Activated B cell treated with CpG ODN at 0.5 μM for 24 hours (primary cell): ENCODE measurements at regions of chr11 and their contacts with region 1.

Region 1: DNA sequence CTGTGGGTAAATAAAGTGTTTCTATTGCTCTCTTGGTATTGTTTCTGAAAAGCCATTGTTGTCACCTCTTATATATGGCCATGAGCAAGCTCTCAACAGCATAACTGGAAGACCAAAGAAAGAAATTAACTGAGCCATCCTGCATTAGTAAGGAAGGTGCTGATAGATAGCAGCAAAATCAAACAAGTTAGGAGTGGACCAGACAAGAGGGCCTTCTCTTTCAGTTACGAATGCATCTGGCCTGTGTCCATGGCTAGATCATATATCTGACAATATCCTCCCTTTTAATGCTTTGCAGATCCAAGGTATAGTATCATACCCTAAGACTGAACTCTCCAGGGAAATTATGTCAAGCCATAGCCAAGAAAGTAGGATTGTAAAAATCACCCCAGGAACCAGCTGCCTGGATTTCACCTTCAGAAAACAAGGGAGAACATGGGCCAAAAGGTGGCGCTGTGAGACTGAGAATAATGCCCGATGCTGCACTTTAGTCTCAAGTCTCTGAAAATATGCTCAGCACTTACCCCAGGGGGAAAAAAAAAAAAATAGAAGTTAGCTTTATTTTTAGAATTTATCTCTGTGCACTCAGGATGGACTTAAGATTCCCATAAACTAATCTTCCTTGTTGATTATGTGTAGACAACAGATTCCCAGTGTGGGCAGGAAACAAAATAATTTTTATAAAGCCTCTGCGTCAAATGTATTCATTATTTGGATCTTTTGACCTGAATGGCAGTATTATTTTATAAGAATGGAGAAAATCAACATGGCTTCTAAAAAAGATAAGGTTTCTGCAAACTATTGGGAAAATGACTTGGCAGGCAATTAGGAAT is 415.1 kb downstream of the ETS1 start:
- DNase-seq: peak; percentile 65
- ATAC-seq: peak; percentile 79
- H3K4me3 Mint-ChIP-seq: no peak overlapping the region
- H3K27ac Mint-ChIP-seq: no peak overlapping the region
- H3K4me1 Mint-ChIP-seq: peaks cover 5% of the 10 kb centered on the region
- H3K27me3 Mint-ChIP-seq: no peaks in the 10 kb centered on the region
- CTCF ChIP-seq: no peak

Region 2: DNA sequence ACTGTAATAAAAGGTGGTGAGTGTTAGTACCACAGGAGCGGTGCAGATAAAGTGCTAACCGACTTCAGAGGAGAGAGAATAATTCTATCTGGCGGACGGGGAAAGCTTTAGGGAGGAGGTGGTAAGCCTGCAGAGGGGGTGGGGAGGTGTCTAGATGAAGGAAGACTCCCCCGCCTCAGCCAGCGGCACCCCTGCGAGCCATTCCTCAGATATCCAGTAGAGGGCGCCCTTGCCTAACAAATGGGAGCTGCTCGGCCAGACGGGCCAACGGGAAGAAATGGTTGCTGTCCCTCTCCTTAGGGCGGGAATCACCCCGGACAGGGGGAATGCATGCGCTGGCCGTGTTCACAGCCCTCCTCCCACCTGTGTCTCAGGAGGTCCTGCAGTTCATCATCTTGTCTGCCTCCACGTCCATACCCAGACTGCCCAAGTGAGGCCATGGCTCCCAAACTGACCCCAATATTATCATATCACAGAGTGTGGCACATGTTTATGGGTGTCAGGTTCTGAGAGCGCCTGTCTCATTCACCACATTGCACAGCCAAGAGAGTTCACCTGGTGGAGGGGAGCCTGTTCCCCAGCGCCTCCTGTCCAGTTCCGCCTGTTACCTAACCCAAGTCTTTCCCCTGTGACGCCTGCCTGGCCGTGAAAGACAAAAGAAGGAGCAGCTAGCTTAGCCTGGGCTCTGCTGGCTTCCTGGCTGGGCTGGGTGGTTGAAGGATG is 1731.3 kb before region 1 on chr11:
- CTCF ChIA-PET with region 1: no interaction called
- POLR2A ChIA-PET with region 1: no interaction called
- intact Hi-C with region 1: loop called (anchors 5 kb)
- DNase-seq: peak; percentile 65
- ATAC-seq: peak; percentile 57
- H3K4me3 Mint-ChIP-seq: no peak overlapping the region
- H3K27ac Mint-ChIP-seq: no peak overlapping the region
- H3K4me1 Mint-ChIP-seq: peaks cover 4% of the 10 kb centered on the region
- H3K27me3 Mint-ChIP-seq: peaks cover 9% of the 10 kb centered on the region
- CTCF ChIP-seq: peak; percentile 70

Region 3: DNA sequence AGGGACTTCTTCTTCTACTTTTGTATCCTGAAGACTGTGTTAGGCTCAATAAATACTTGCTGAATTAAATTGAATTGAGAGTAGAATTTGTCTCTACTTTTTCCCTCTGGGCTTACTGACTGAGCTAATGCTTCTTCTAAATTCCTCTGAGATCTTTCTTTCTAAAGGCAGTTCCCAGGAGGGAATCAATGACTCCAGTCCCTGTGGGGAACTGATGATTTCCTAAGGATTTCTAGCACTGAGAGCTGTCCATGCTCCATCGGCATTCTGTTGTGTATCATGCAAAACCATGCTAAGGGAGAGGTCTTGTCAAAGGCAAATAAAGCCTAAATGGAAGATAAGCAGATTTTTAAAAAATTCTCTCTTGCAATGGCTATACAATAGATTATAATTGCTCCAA is 1022.9 kb before region 1 on chr11:
- CTCF ChIA-PET with region 1: no interaction called
- POLR2A ChIA-PET with region 1: no interaction called
- intact Hi-C with region 1: no loop called
- DNase-seq: no peak
- ATAC-seq: no peak
- H3K4me3 Mint-ChIP-seq: no peak overlapping the region
- H3K27ac Mint-ChIP-seq: no peak overlapping the region
- H3K4me1 Mint-ChIP-seq: no peaks in the 10 kb centered on the region
- H3K27me3 Mint-ChIP-seq: no peaks in the 10 kb centered on the region
- CTCF ChIP-seq: no peak

Region 4: GRCh38 chr11:128261011-128261421 is 88.8 kb after region 1 on chr11:
- CTCF ChIA-PET with region 1: no interaction called
- POLR2A ChIA-PET with region 1: no interaction called
- intact Hi-C with region 1: no loop called
- DNase-seq: no peak
- ATAC-seq: peak; percentile 22
- H3K4me3 Mint-ChIP-seq: no peak overlapping the region
- H3K27ac Mint-ChIP-seq: peak overlapping the region; percentile 85
- H3K4me1 Mint-ChIP-seq: peaks cover 84% of the 10 kb centered on the region
- H3K27me3 Mint-ChIP-seq: no peaks in the 10 kb centered on the region
- CTCF ChIP-seq: no peak

Region 5: DNA sequence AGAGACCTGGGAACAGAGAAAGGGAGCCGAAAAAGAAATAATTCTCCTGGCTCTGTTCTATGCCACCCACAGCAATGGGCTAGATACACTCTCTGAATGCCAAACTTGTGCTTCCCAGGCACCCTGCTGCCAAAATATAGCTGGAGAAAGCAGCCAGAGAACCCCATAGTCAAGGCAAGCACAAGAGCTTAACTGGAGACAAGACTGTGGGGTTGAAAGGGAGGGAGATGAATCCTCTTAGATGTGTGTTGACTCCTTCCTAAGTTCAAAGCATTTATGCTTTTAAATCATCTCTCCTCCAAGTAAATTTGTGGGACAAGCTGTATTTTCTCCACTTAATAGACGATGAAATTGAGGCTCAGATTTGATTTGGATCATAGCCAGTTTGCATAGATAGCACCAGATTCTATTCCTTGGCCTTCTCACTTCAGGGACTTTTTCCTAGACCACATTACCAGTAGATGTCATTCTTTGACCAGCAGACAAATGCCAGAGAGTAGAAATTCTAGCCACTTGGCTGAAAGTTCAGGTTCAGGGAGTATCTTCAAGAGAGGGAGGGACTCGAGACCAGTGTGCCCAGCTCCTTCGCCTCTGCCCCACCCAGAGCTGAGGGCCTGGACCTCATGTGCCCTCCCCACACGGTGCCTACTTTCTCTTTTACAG is 431.6 kb after region 1 on chr11:
- CTCF ChIA-PET with region 1: interaction called, 13 read pairs
- POLR2A ChIA-PET with region 1: no interaction called
- intact Hi-C with region 1: no loop called
- DNase-seq: no peak
- ATAC-seq: peak; percentile 63
- H3K4me3 Mint-ChIP-seq: no peak overlapping the region
- H3K27ac Mint-ChIP-seq: peak overlapping the region; percentile 78
- H3K4me1 Mint-ChIP-seq: peaks cover 70% of the 10 kb centered on the region
- H3K27me3 Mint-ChIP-seq: no peaks in the 10 kb centered on the region
- CTCF ChIP-seq: no peak

Region 6: GRCh38 chr11:128776424-128777284 is 604.4 kb after region 1 on chr11:
- CTCF ChIA-PET with region 1: interaction called, 17 read pairs
- POLR2A ChIA-PET with region 1: no interaction called
- intact Hi-C with region 1: loop called (anchors 1 kb)
- DNase-seq: no peak
- ATAC-seq: no peak
- H3K4me3 Mint-ChIP-seq: no peak overlapping the region
- H3K27ac Mint-ChIP-seq: peak overlapping the region; percentile 56
- H3K4me1 Mint-ChIP-seq: peaks cover 42% of the 10 kb centered on the region
- H3K27me3 Mint-ChIP-seq: no peaks in the 10 kb centered on the region
- CTCF ChIP-seq: no peak

Region 7: DNA sequence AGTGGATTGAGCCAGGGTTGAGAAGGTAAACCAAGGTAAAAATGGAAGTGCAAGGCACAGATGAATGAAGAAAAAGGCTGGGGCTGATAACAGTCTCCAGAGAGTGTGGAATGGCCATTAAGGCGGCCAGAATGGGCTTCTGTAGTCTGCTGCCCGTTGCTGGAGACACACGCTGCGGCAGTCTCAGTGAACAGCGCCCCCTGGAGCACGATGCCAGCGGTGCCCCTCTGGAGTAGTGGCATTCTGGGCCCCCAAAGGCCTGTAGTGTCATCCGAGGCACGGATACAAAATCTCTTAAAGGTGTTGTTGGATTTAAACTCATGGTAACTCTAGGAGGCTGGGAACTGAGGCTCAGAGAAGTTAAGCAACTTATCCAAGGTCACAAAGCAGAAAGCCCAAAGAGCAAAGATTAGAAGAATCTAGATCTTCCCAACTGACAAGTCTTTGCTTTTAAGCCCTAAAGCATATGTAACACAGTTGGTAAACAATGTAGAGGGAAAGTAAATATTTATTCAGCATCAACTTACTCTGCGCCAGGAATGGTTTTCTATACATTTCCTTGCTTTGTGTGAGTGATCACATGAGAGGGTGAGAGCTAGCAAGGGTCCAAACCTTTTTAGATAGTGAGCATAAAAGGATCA is 676.7 kb after region 1 on chr11:
- CTCF ChIA-PET with region 1: interaction called, 8 read pairs
- POLR2A ChIA-PET with region 1: no interaction called
- intact Hi-C with region 1: loop called (anchors 1 kb)
- DNase-seq: peak; percentile 57
- ATAC-seq: peak; percentile 73
- H3K4me3 Mint-ChIP-seq: no peak overlapping the region
- H3K27ac Mint-ChIP-seq: peak overlapping the region; percentile 60
- H3K4me1 Mint-ChIP-seq: peaks cover 58% of the 10 kb centered on the region
- H3K27me3 Mint-ChIP-seq: no peaks in the 10 kb centered on the region
- CTCF ChIP-seq: peak; percentile 29

Region 8: DNA sequence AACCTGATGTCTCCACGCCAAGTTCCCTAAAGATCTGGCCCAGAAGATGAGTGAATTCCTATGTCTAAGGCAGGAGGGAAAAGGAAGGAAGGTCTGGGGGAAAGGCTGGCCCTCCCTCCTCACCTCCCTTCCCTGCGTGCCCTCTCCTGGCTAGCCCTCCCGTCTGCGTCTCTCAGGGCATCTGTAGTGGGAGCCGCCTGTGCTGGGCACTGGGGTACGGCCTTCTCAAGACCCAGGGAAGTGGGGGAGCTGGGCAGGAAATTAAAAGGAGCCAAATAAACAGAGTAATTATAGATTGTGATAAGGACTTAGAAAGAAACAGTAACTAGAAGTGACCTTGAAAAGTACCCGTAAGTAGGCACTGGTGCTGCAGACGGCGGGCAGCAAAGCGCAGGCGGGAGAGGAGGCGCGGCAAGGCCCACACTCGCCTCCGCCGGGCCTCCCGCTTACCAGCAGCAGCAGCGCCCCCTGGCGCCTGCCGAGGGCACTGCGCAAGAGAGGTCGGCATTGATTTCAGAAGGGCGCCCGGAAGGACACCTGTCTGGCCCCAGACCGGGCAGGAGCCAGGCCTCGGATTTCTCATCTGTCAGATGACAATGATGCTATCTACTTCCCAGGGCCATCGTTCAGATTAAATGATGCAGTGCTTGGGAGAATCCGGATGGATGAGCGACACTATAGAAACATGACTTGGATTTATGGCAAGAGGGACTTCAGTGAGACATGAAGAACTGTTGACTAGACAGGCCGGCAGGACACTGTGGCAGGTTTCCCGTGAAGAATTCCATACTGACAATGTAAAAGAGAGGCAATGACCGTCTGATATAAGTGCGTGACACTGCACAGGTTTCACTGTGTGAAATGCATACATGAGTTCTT is 687.5 kb after region 1 on chr11:
- CTCF ChIA-PET with region 1: interaction called, 8 read pairs
- POLR2A ChIA-PET with region 1: no interaction called
- intact Hi-C with region 1: loop called (anchors 1 kb)
- DNase-seq: peak; percentile 77
- ATAC-seq: peak; percentile 98
- H3K4me3 Mint-ChIP-seq: no peak overlapping the region
- H3K27ac Mint-ChIP-seq: no peak overlapping the region
- H3K4me1 Mint-ChIP-seq: peaks cover 16% of the 10 kb centered on the region
- H3K27me3 Mint-ChIP-seq: no peaks in the 10 kb centered on the region
- CTCF ChIP-seq: peak; percentile 54

Region 9: DNA sequence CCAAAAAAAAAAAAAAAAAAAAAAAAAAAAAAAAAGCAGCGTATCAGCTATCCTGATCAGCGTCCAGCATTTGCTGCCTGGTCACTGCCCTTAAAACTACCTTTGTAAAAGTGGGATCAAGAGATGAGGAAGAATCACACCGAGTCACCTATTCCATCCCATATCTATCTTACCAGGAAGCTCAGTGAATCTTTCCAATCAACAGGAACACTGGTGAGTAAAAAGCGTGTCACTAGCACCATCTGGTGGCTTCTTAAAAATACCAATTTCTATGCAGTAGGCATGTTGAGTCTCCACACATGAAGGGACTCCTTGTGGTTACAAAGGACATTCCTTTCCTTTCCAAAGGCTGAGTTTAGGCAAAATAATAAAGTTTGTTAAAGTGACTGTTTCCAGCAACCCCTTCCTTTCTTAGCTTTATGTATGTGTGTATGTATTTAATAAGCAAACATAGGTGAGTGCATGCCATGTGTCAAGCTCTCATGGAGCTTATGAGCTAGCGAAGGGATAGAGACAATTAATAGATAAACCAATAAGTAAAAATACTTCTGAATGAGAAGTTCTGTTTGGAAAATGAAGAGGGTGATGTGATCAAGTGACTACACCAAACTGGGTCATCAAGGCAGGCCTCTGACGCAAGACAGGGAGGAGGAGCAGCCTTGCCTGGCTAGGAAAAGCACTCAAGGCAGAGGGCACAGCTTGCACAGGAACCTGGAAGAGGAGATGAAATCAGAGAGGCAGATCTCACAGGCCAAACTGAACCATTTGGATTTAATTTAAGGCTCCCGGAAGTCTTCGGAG is 784.3 kb after region 1 on chr11:
- CTCF ChIA-PET with region 1: interaction called, 25 read pairs
- POLR2A ChIA-PET with region 1: no interaction called
- intact Hi-C with region 1: loop called (anchors 1 kb)
- DNase-seq: no peak
- ATAC-seq: peak; percentile 49
- H3K4me3 Mint-ChIP-seq: no peak overlapping the region
- H3K27ac Mint-ChIP-seq: no peak overlapping the region
- H3K4me1 Mint-ChIP-seq: peaks cover 2% of the 10 kb centered on the region
- H3K27me3 Mint-ChIP-seq: peaks cover 14% of the 10 kb centered on the region
- CTCF ChIP-seq: peak; percentile 31